Natural killer cell (primary cell): ENCODE measurements at regions of chrX and their contacts with region 1.

Region 1: DNA sequence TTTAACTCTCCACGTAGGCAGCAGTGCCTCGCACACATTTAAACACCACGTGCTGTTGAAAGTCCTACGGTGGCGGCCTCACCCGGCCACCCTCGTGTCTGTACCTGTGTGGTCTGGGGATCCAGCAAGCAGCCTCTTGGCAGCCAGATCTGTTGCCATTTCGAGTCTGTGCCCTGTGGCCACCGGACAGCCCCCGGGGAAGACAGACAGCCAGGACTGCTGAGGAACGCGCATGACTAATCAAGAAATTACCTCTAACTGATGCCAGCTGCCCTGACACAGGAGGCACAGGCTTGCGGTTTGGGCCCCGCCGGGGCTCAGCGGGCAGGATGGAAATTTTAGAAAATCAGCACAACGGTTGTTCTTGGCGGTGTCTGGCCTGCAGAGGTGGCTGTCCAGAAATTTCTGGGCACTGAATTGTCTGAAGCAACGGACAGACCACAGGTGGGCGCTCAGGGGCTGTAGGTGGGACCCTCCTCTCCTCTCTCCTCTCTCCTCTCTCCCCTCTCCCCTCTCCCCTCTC is 15.6 kb upstream of the ASMTL start:
- DNase-seq: peak; percentile 73 to 89
- ATAC-seq: peak; percentile 61 to 71 (median 66)
- H3K4me3 ChIP-seq: no peak overlapping the region
- H3K4me3 Mint-ChIP-seq: peak overlapping the region; percentile 93
- H3K27ac ChIP-seq: peak overlapping the region; percentile 83
- H3K27ac Mint-ChIP-seq: peak overlapping the region; percentile 90 to 91
- H3K4me1 ChIP-seq: peaks cover 93% of the 10 kb centered on the region
- H3K4me1 Mint-ChIP-seq: peaks cover 73 to 91% of the 10 kb centered on the region in 2 donors
- H3K27me3 ChIP-seq: no peaks in the 10 kb centered on the region
- H3K27me3 Mint-ChIP-seq: no peaks in the 10 kb centered on the region
- CTCF ChIP-seq: no peak

Region 2: GRCh38 chrX:1481636-1482529 is 13.6 kb after region 1 on chrX:
- intact Hi-C with region 1: loop called (anchors 1 kb)
- DNase-seq: peak; percentile 67 to 92
- ATAC-seq: peak; percentile 69 to 85 (median 83)
- H3K4me3 ChIP-seq: peak overlapping the region; percentile 7
- H3K4me3 Mint-ChIP-seq: peak overlapping the region; percentile 92
- H3K27ac ChIP-seq: peak overlapping the region; percentile 95
- H3K27ac Mint-ChIP-seq: peak overlapping the region; percentile 98 to 99
- H3K4me1 ChIP-seq: peaks cover 80% of the 10 kb centered on the region
- H3K4me1 Mint-ChIP-seq: peaks cover 68 to 72% of the 10 kb centered on the region in 2 donors
- H3K27me3 ChIP-seq: no peaks in the 10 kb centered on the region
- H3K27me3 Mint-ChIP-seq: no peaks in the 10 kb centered on the region
- CTCF ChIP-seq: no peak

Region 3: GRCh38 chrX:1649621-1650020 is 181.3 kb after region 1 on chrX:
- intact Hi-C with region 1: no loop called
- DNase-seq: no peak
- ATAC-seq: no peak
- H3K4me3 ChIP-seq: no peak overlapping the region
- H3K4me3 Mint-ChIP-seq: no peak overlapping the region
- H3K27ac ChIP-seq: no peak overlapping the region
- H3K27ac Mint-ChIP-seq: no peak overlapping the region
- H3K4me1 ChIP-seq: peaks cover 5% of the 10 kb centered on the region
- H3K4me1 Mint-ChIP-seq: peaks cover 5 to 6% of the 10 kb centered on the region in 2 donors
- H3K27me3 ChIP-seq: no peaks in the 10 kb centered on the region
- H3K27me3 Mint-ChIP-seq: peaks cover 7 to 13% of the 10 kb centered on the region in 2 donors
- CTCF ChIP-seq: no peak

Region 4: GRCh38 chrX:2690856-2691542 is 1222.7 kb after region 1 on chrX and contains the start of gene CD99:
- intact Hi-C with region 1: loop called (anchors 10 kb)
- DNase-seq: peak; percentile 77 to 94
- ATAC-seq: peak; percentile 87 to 96 (median 93)
- H3K4me3 ChIP-seq: peak within 1 kb of the TSS; percentile 82
- H3K4me3 Mint-ChIP-seq: peak within 1 kb of the TSS; percentile 99
- H3K27ac ChIP-seq: peak within 1 kb of the TSS; percentile 60
- H3K27ac Mint-ChIP-seq: peak within 1 kb of the TSS; percentile 86 to 88
- H3K4me1 ChIP-seq: peaks cover 45% of the 10 kb centered on the region
- H3K4me1 Mint-ChIP-seq: peaks cover 37 to 39% of the 10 kb centered on the region in 2 donors
- H3K27me3 ChIP-seq: no peaks in the 10 kb centered on the region
- H3K27me3 Mint-ChIP-seq: no peaks in the 10 kb centered on the region
- CTCF ChIP-seq: no peak
- total RNA-seq, gene CD99: 312 to 340 (median 333) TPM